Mammary epithelial cell (primary cell): ENCODE measurements at regions of chr1 and their contacts with region 1.

Region 1: DNA sequence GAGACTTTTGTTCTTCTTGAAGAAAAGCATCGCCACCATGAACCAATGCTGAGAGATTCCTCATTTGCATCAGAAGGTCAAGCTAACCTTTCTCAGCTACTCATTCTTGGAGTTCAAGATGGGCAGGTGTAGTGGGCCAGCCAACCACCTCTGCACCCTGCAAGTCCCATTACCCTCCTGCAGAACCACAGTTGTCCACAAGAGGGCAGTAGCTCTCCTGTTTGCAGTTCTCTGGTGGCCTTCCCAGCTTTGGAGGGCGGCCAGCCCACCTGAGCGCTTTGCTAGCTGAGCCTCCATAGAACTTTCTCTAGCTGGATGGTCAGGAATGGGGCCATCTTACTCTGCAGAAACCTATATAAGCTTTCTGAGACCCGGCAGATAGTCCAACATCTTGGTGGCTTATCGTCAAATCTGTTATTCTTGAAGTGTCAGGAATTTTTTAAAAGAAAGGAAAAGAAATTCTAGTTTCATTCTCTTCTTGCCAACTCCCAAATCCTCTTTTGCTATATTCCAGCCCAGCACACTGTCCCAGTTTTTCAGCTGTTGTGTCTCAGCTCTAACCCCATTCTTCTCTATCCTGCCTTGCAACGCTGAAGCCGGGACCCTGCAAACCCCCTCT is 11.0 kb upstream of the LMX1A start:
- DNase-seq: peak; percentile 37
- H3K4me3 ChIP-seq: no peak overlapping the region
- H3K27ac ChIP-seq: no peak overlapping the region
- H3K4me1 ChIP-seq: peaks cover 13% of the 10 kb centered on the region
- H3K27me3 ChIP-seq: no peaks in the 10 kb centered on the region
- CTCF ChIP-seq: peak; percentile 94 to 95

Region 2: GRCh38 chr1:165114022-165114888 is 253.2 kb before region 1 on chr1:
- CTCF ChIA-PET with region 1: interaction called, 4 read pairs
- dilution Hi-C with region 1: no loop called
- in situ Hi-C with region 1: no loop called
- intact Hi-C with region 1: loop called (anchors 2 kb)
- DNase-seq: peak; percentile 38
- H3K4me3 ChIP-seq: no peak overlapping the region
- H3K27ac ChIP-seq: no peak overlapping the region
- H3K4me1 ChIP-seq: peaks cover 13% of the 10 kb centered on the region
- H3K27me3 ChIP-seq: no peaks in the 10 kb centered on the region
- CTCF ChIP-seq: peak; percentile 77 to 80

Region 3: GRCh38 chr1:165207853-165208515 is 159.5 kb before region 1 on chr1:
- CTCF ChIA-PET with region 1: no interaction called
- dilution Hi-C with region 1: no loop called
- in situ Hi-C with region 1: no loop called
- intact Hi-C with region 1: no loop called
- DNase-seq: no peak
- H3K4me3 ChIP-seq: no peak overlapping the region
- H3K27ac ChIP-seq: no peak overlapping the region
- H3K4me1 ChIP-seq: no peaks in the 10 kb centered on the region
- H3K27me3 ChIP-seq: no peaks in the 10 kb centered on the region
- CTCF ChIP-seq: no peak

Region 4: GRCh38 chr1:165257969-165258459 is 109.5 kb before region 1 on chr1:
- CTCF ChIA-PET with region 1: interaction called, 7 read pairs
- dilution Hi-C with region 1: no loop called
- in situ Hi-C with region 1: no loop called
- intact Hi-C with region 1: loop called (anchors 1 kb)
- DNase-seq: peak; percentile 55
- H3K4me3 ChIP-seq: no peak overlapping the region
- H3K27ac ChIP-seq: no peak overlapping the region
- H3K4me1 ChIP-seq: peaks cover 4% of the 10 kb centered on the region
- H3K27me3 ChIP-seq: no peaks in the 10 kb centered on the region
- CTCF ChIP-seq: peak; percentile 85 to 86

Region 5: GRCh38 chr1:165303386-165303785 is 64.1 kb before region 1 on chr1:
- CTCF ChIA-PET with region 1: no interaction called
- dilution Hi-C with region 1: loop called (anchors 5 kb)
- in situ Hi-C with region 1: no loop called
- intact Hi-C with region 1: no loop called
- DNase-seq: no peak
- H3K4me3 ChIP-seq: no peak overlapping the region
- H3K27ac ChIP-seq: no peak overlapping the region
- H3K4me1 ChIP-seq: no peaks in the 10 kb centered on the region
- H3K27me3 ChIP-seq: no peaks in the 10 kb centered on the region
- CTCF ChIP-seq: no peak